ENCODE measurements at regions of chr14 and their contacts with region 1.

Region 1: GRCh38 chr14:38197001-38197783 is 10.5 kb upstream of the SSTR1 start:
- DNase-seq: no peak
- ATAC-seq: no peak
- H3K4me3 ChIP-seq: no peak overlapping the region
- H3K27ac ChIP-seq: no peak overlapping the region
- H3K4me1 ChIP-seq: no peaks in the 10 kb centered on the region
- H3K27me3 ChIP-seq: no peaks in the 10 kb centered on the region
- CTCF ChIP-seq: peak; percentile 12 to 55 (median 25); a peak in 4 of 6 replicates
- POLR2A ChIP-seq: no peak
- RAD21 ChIP-seq: 0 out of 2 replicates have a peak, but pooled peaks have one; percentile 17

Region 2: DNA sequence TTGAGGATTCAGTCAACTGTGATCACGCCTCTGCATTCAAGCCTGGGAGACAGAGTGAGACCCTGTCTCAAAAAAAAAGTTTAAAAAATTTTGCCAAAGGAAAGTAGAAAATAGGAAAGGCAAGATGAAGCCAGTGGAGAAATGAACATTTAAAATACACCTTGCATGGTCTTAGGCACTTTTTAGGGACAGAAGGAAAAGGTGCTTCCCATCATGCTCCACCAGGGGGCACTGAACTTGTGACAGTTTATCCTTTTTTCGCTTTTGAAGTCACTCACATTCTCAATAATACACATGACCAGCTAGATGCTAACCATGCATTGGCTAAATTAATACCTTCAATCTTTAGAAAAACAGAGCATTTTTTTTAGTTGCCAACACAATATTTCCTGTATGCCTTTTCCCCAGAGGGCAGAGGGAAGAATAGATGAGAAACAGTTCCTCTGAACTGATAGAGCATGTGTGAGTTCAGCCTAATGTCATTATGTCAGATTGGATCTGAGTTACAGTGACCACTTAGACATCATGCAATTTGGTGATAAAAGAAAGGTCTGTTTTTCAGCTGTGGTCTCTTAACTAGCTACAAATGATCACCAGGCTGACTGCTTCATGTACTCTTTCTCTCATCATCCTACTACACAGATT is 211.2 kb before region 1 on chr14:
- CTCF ChIA-PET with region 1: no interaction called
- POLR2A ChIA-PET with region 1: no interaction called
- RAD21 ChIA-PET with region 1: no interaction called
- intact Hi-C with region 1: loop called (anchors 10 kb)
- DNase-seq: peak; percentile 41
- ATAC-seq: peak; percentile 47
- H3K4me3 ChIP-seq: no peak overlapping the region
- H3K27ac ChIP-seq: no peak overlapping the region
- H3K4me1 ChIP-seq: no peaks in the 10 kb centered on the region
- H3K27me3 ChIP-seq: no peaks in the 10 kb centered on the region
- CTCF ChIP-seq: peak; percentile 25 to 81 (median 71); a peak in 4 of 6 replicates
- POLR2A ChIP-seq: no peak
- RAD21 ChIP-seq: peak; percentile 32; the same call in 1 of the 2 replicates

Measured in HCT116 (cell line).